ENCODE measurements at regions of chr6 and their contacts with region 1.

Region 1: GRCh38 chr6:26270903-26271667 is 93.9 kb upstream of the BTN3A2 start:
- DNase-seq: peak; percentile 66 to 83 (median 73)
- H3K4me3 ChIP-seq: peak overlapping the region; percentile 50 to 82 (median 58)
- H3K4me3 Mint-ChIP-seq: no peak overlapping the region
- H3K27ac ChIP-seq: peak overlapping the region in 1 of 2 donors; percentile 83
- H3K27ac Mint-ChIP-seq: peak overlapping the region in 5 of 7 donors; percentile 82 to 92 (median 91)
- H3K4me1 ChIP-seq: peaks cover 36 to 49% of the 10 kb centered on the region in 2 donors
- H3K4me1 Mint-ChIP-seq: peaks cover 33% of the 10 kb centered on the region
- H3K27me3 ChIP-seq: no peaks in the 10 kb centered on the region
- H3K27me3 Mint-ChIP-seq: peaks cover 0 to 3% (median 0%) of the 10 kb centered on the region in 3 donors
- CTCF ChIP-seq: no peak

Region 2: DNA sequence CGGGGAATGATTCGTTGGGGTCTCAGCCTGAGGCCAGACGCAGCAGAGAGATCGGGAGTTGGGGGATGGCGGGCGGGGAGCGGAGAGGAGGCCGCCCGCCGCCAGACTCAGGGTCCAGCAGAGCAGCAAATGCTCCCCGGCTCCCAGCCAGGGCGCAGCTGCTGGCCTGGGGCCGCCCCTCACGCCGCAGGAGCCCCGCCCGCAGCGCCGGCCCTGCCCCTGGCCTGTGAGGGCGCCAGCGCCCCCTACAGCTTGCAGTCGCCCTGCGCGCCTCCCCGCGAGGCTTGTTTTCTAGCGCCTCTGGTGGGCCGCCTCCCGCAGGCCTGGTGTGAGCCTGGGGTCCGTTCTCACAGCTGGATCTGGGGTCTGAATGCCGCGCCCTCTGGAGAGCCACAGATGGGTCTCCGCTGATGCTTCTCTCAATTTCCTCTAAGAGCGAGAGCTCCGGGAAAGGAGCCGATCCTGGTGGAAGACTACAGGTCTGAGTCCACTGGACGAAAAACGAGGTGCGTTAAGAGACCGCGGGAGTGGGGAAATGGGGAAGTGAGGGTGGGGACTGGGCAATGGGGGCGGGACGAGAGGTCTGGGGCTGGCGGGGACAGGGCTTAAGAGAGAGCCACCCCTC is 278.6 kb before region 1 on chr6:
- intact Hi-C with region 1: no loop called
- DNase-seq: peak; percentile 89 to 92 (median 90)
- H3K4me3 ChIP-seq: peak overlapping the region; percentile 52 to 80 (median 60)
- H3K4me3 Mint-ChIP-seq: peak overlapping the region; percentile 95 to 98
- H3K27ac ChIP-seq: peak overlapping the region; percentile 88 to 99
- H3K27ac Mint-ChIP-seq: peak overlapping the region; percentile 96 to 99 (median 99)
- H3K4me1 ChIP-seq: peaks cover 17 to 29% of the 10 kb centered on the region in 2 donors
- H3K4me1 Mint-ChIP-seq: peaks cover 20% of the 10 kb centered on the region
- H3K27me3 ChIP-seq: no peaks in the 10 kb centered on the region
- H3K27me3 Mint-ChIP-seq: peaks cover 0 to 2% (median 1%) of the 10 kb centered on the region in 3 donors
- CTCF ChIP-seq: peak; percentile 100

Region 3: GRCh38 chr6:26031595-26032339 is 239.3 kb before region 1 on chr6:
- intact Hi-C with region 1: loop called in 1 of 2 experiments (anchors 10 kb)
- DNase-seq: peak; percentile 74 to 83 (median 74)
- H3K4me3 ChIP-seq: peak overlapping the region; percentile 56 to 86 (median 82)
- H3K4me3 Mint-ChIP-seq: peak overlapping the region; percentile 89 to 95
- H3K27ac ChIP-seq: peak overlapping the region; percentile 53 to 66
- H3K27ac Mint-ChIP-seq: peak overlapping the region; percentile 73 to 94 (median 90)
- H3K4me1 ChIP-seq: peaks cover 35 to 50% of the 10 kb centered on the region in 2 donors
- H3K4me1 Mint-ChIP-seq: peaks cover 47% of the 10 kb centered on the region
- H3K27me3 ChIP-seq: no peaks in the 10 kb centered on the region
- H3K27me3 Mint-ChIP-seq: peaks cover 0 to 4% (median 3%) of the 10 kb centered on the region in 3 donors
- CTCF ChIP-seq: no peak

Region 4: DNA sequence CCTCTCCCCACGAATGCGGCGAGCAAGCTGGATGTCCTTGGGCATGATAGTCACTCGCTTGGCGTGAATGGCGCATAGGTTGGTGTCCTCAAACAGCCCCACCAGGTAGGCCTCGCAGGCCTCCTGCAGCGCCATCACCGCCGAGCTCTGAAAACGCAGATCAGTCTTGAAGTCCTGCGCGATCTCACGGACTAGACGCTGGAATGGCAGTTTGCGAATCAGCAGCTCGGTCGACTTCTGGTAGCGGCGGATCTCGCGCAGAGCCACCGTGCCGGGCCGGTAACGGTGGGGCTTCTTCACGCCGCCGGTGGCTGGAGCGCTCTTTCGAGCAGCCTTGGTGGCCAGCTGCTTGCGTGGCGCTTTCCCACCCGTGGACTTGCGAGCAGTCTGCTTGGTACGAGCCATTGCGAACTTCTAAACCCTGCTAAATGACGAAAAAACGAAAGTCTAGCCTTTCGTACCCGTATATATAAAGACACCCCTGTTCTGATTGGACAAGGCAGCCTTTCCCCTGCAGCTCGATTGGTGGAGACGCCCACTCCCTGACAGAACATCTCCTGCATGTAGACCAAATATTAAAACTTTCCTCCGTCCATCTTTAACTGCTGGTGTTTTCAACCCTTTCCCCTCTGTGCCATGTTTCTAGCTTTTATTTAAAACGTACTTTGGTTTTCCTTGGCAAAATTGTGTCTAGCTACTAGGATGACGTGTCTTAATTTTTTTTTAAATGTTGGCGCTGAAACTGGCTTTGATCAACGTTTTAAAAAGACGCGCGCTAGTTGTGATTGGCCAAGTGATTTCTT is 74.0 kb before region 1 on chr6:
- intact Hi-C with region 1: loop called in 1 of 2 experiments (anchors 5 kb)
- DNase-seq: peak; percentile 85 to 87 (median 87)
- H3K4me3 ChIP-seq: peak overlapping the region; percentile 53 to 93 (median 64)
- H3K4me3 Mint-ChIP-seq: peak overlapping the region; percentile 94 to 98
- H3K27ac ChIP-seq: peak overlapping the region; percentile 81 to 88
- H3K27ac Mint-ChIP-seq: peak overlapping the region; percentile 92 to 98 (median 96)
- H3K4me1 ChIP-seq: peaks cover 37 to 55% of the 10 kb centered on the region in 2 donors
- H3K4me1 Mint-ChIP-seq: peaks cover 34% of the 10 kb centered on the region
- H3K27me3 ChIP-seq: no peaks in the 10 kb centered on the region
- H3K27me3 Mint-ChIP-seq: no peaks in the 10 kb centered on the region
- CTCF ChIP-seq: no peak